Ascending aorta (tissue), 2 donors: ENCODE measurements at regions of chr12 and their contacts with region 1.

Region 1: DNA sequence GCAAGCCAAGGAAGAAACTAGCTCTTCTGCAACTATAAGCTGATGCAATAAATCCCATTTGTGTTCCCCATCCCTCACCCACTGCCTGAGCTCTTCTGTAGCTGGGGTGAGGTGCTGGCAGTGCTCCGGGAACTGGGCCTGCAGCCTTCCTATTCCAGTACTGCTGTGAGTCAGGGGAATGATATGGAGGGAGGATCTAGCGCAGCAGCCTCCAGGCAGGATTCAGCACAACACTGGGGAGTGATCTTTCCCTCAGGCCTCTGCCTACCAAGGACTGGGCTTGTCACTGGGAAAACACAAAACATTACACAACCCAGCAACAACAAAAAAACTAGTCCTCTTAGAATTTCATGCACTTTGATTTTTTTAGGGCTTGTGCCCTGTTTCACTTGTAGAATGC is 58.7 kb downstream of the ST8SIA1 start:
- DNase-seq: peak; percentile 66 to 97
- H3K4me3 ChIP-seq: no peak overlapping the region
- H3K27ac ChIP-seq: peak overlapping the region; percentile 56 to 86
- H3K4me1 ChIP-seq: peaks cover 0 to 30% of the 10 kb centered on the region in 2 donors
- H3K27me3 ChIP-seq: no peaks in the 10 kb centered on the region
- CTCF ChIP-seq: no peak

Region 2: DNA sequence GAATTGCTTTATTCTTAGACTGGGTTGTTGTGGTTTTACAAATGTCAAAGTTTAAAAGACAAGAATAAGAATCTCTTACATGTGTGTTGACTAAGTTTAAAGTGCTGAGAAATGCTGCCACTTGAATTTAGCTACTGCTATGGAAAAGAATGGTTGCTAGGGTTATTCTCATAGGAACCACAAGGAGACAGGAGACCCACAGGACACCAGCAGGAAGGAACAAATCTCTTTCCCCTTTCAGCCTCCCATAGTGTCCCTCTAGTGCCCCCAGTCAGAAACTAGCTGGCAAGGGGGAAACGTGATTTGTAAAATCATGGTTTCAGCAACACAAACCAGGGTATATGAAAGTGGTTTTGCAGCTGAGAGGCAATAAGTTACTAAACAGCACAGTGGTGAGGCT is 44.0 kb before region 1 on chr12:
- intact Hi-C with region 1: loop called (anchors 5 kb)
- DNase-seq: no peak
- H3K4me3 ChIP-seq: no peak overlapping the region
- H3K27ac ChIP-seq: no peak overlapping the region
- H3K4me1 ChIP-seq: peaks cover 0 to 2% of the 10 kb centered on the region in 2 donors
- H3K27me3 ChIP-seq: no peaks in the 10 kb centered on the region
- CTCF ChIP-seq: peak in 1 of 3 experiments; percentile 7

Region 3: GRCh38 chr12:22321638-22322037 is 45.8 kb after region 1 on chr12:
- intact Hi-C with region 1: no loop called
- DNase-seq: peak in 1 of 2 donors; percentile 63
- H3K4me3 ChIP-seq: no peak overlapping the region
- H3K27ac ChIP-seq: peak overlapping the region; percentile 15 to 55
- H3K4me1 ChIP-seq: peaks cover 0 to 5% of the 10 kb centered on the region in 2 donors
- H3K27me3 ChIP-seq: no peaks in the 10 kb centered on the region
- CTCF ChIP-seq: no peak